Sigmoid colon (tissue), 7 donors: ENCODE measurements at regions of chr3 and their contacts with region 1.

Region 1: DNA sequence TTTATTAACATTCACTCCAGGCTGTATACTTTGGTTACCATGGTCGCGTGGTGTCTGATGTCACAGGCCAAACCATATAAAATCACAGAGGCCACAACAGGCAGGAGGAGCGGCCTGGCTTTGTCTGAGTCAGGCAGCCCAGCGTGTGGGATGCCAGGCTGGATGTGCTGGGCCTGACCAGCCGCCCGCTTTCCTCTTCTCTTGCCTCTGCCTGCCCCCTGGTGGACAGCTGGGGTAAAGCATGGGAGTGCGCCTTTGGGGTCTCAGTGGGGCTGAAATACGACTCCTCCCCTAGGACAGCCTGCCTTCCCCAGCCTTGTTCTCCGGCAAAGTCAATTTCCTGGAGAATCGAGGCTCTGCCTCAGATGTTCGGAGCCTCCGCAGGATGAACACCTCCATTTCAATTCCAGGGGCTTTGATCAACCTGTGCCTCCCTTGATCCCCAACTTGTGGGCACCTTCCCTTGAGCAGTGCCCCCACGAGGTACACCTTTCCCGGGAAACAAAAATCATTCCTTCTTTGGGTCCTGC is 78.2 kb downstream of the CCNL1 start:
- DNase-seq: peak; percentile 94
- H3K4me3 ChIP-seq: no peak overlapping the region
- H3K27ac ChIP-seq: peak overlapping the region; percentile 51 to 81 (median 62)
- H3K4me1 ChIP-seq: peaks cover 0 to 51% (median 29%) of the 10 kb centered on the region in 4 donors
- H3K27me3 ChIP-seq: no peaks in the 10 kb centered on the region
- CTCF ChIP-seq: peak; percentile 97 to 100 (median 98)
- EP300 ChIP-seq: no peak
- POLR2A ChIP-seq: no peak

Region 2: GRCh38 chr3:156151824-156152428 is 929.8 kb before region 1 on chr3:
- intact Hi-C with region 1: loop called (anchors 2 kb)
- DNase-seq: peak; percentile 85
- H3K4me3 ChIP-seq: no peak overlapping the region
- H3K27ac ChIP-seq: peak overlapping the region in 3 of 4 donors; percentile 7 to 65 (median 54)
- H3K4me1 ChIP-seq: peaks cover 0 to 44% (median 38%) of the 10 kb centered on the region in 4 donors
- H3K27me3 ChIP-seq: no peaks in the 10 kb centered on the region
- CTCF ChIP-seq: peak; percentile 48 to 64 (median 58)
- EP300 ChIP-seq: no peak
- POLR2A ChIP-seq: no peak

Region 3: GRCh38 chr3:156535162-156535627 is 546.6 kb before region 1 on chr3:
- intact Hi-C with region 1: loop called (anchors 5 kb)
- DNase-seq: peak; percentile 94
- H3K4me3 ChIP-seq: no peak overlapping the region
- H3K27ac ChIP-seq: peak overlapping the region; percentile 71 to 93 (median 85)
- H3K4me1 ChIP-seq: peaks cover 0 to 85% (median 61%) of the 10 kb centered on the region in 4 donors
- H3K27me3 ChIP-seq: no peaks in the 10 kb centered on the region
- CTCF ChIP-seq: no peak
- EP300 ChIP-seq: peak in 3 of 4 donors; percentile 42 to 77 (median 61)
- POLR2A ChIP-seq: no peak

Region 4: DNA sequence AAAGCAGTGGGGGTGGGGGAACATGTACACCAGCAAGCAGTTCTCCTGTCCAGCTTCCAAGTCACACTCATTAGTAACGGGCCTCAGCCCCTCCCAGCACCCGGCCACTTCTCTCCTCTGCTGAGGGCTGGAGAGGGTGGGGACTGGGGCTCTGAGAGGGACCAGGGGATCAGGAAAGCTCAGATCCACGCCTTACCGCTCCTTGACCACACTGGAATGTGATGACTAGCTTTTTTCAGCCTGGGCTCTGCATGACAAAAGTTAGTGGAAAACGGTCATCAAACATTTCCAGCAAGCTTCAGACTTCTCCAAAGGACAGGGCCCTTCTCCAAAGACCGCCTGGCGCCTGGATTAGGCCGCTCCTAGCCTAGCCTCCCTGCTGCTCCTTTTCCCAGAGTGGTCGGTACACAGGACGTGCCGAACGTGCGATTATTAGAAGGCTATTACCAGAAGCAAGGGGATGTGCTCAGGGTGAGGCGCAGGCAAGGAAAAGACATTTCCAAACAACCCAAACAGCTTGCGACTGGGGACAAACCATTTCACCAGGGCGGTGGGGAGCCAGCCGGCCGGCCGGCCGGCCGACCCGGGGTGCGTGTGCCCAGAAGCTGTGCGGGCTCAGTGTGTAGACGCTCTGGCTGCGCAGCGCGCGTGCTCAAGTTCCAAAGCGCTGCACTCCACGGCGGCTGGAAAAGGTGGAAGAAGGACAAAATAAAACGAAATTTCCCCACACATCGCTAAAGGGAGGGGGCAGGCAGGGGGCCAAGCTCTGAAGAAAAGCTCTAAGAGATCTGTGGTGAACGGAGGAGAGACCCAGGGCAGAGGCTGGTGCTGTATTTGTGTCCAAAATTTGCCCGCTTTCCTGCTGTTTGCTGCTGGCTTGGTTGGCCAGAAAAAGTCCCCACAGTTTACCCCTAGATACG is 475.8 kb before region 1 on chr3:
- intact Hi-C with region 1: loop called (anchors 5 kb)
- DNase-seq: peak; percentile 71
- H3K4me3 ChIP-seq: peak overlapping the region; percentile 15 to 49 (median 46)
- H3K27ac ChIP-seq: peak overlapping the region; percentile 64 to 86 (median 78)
- H3K4me1 ChIP-seq: peaks cover 0 to 47% (median 19%) of the 10 kb centered on the region in 4 donors
- H3K27me3 ChIP-seq: no peaks in the 10 kb centered on the region
- CTCF ChIP-seq: no peak
- EP300 ChIP-seq: no peak
- POLR2A ChIP-seq: peak in 1 of 2 donors; percentile 12

Region 5: DNA sequence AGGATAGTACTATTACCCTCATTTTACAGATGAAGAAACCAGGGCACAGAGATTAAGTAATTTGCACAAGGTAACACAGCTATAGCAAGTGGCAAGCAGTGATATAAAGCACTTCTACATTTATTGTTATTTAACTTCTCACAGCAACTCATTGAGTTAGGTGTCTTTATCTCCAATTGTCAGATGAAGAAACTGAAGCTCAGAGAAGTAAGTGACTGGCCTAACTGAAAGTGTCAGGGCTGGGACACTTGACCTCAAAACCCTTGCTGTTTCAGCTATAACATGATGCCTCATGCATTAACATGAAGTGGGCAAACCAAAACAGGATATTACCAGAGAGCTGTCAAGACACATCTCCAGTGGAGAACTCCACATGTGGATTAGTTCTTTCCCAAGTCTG is 321.4 kb before region 1 on chr3:
- intact Hi-C with region 1: loop called (anchors 5 kb)
- DNase-seq: no peak
- H3K4me3 ChIP-seq: no peak overlapping the region
- H3K27ac ChIP-seq: no peak overlapping the region
- H3K4me1 ChIP-seq: peaks cover 0 to 19% (median 15%) of the 10 kb centered on the region in 4 donors
- H3K27me3 ChIP-seq: no peaks in the 10 kb centered on the region
- CTCF ChIP-seq: no peak
- EP300 ChIP-seq: no peak
- POLR2A ChIP-seq: no peak

Region 6: DNA sequence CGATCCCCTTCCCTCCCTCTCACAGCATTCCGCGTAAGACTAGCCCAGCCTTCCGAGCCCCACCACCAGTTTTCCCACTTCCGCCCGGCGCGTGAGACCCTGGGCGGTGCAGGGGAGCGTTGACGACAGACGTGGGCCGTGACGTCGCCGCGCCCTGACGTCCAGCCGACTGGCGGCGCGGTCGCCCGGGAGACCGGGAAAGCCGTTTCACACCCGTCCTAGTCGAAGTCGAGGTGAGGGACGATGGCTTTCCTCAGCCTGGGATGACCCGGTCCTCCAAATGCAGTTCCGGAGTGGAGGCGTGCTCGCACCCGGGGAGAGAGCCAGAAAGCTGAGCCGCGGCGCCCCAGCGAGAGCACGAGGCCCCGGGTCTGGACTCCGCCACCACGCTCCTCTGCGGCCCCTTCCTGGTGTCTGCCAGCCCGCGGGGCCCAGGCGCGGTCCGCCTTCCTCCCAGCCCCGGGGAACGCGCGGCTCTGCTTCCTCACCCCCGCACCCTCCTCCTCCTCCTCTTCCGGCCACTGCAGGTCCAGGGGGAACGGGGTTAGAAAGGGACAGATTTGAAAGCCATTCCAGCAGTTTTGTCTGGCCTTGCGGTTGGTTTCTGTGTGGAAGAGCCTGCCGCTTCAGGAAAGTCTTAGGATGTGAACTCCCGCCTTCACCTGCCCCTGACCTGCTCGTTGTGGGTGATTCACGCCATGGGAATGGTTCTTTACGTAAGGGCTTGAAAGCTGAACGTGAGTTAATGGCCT is 255.4 kb before region 1 on chr3 and contains the start of gene LEKR1:
- intact Hi-C with region 1: loop called (anchors 5 kb)
- DNase-seq: peak; percentile 92
- H3K4me3 ChIP-seq: peak within 1 kb of the TSS; percentile 57 to 69 (median 64)
- H3K27ac ChIP-seq: peak within 1 kb of the TSS; percentile 80 to 91 (median 84)
- H3K4me1 ChIP-seq: peaks cover 0 to 4% (median 0%) of the 10 kb centered on the region in 4 donors
- H3K27me3 ChIP-seq: no peaks in the 10 kb centered on the region
- CTCF ChIP-seq: no peak
- EP300 ChIP-seq: peak in 2 of 4 donors; percentile 48 to 70
- POLR2A ChIP-seq: peak; percentile 49 to 78
- total RNA-seq, gene LEKR1: 0.36 to 1.7 (median 0.68) TPM in 3 of 4 donors, not detected in the other

Region 7: GRCh38 chr3:157045238-157045850 is 36.4 kb before region 1 on chr3:
- intact Hi-C with region 1: loop called (anchors 2 kb)
- DNase-seq: peak; percentile 72
- H3K4me3 ChIP-seq: peak overlapping the region in 3 of 4 donors; percentile 21 to 36 (median 35)
- H3K27ac ChIP-seq: peak overlapping the region; percentile 55 to 82 (median 74)
- H3K4me1 ChIP-seq: peaks cover 0 to 29% (median 16%) of the 10 kb centered on the region in 4 donors
- H3K27me3 ChIP-seq: no peaks in the 10 kb centered on the region
- CTCF ChIP-seq: no peak
- EP300 ChIP-seq: peak in 1 of 4 donors; percentile 48
- POLR2A ChIP-seq: no peak